Heart left ventricle (tissue), 16 donors: ENCODE measurements at regions of chr16 and their contacts with region 1.

Region 1: DNA sequence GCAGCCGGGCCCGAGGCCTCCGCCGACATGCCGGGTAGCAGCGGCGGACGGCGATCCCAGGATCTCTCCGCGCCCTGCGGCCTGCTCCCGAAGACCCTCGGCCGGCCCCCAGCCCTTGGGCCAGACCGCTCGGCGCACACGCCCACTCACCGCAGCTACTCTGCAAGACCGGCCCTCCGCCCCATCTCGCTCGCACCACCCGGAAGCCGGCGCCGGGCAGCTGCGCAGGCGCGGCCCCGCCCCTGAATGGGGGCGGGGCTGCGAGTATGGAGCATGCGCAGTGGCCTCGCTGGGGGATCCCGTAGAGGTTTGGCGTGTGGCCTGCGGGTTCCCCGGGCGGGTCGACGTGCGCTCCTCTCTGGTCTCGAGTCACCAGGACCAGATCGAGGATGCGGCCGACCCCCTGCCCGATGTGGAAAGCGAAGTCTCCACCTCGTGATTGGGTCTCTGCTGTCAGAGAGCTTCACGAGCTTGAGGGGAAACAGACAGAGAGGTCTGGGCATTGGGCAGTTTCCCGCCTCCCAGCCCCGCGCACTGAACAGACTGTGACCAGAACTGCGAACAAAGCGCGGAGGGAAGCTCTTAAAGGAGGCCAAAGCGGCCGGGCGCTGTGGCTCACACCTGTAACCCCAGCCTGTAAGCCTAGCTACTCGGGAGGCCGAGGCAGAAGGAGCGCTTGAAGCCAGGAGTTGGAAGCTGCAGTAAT is at the start of gene KCTD13:
- DNase-seq: peak; percentile 85 to 95 (median 89)
- ATAC-seq: peak; percentile 89 to 99 (median 99)
- H3K4me3 ChIP-seq: peak within 1 kb of the TSS; percentile 72 to 100 (median 92)
- H3K27ac ChIP-seq: peak within 1 kb of the TSS; percentile 72 to 96 (median 88)
- H3K4me1 ChIP-seq: peaks cover 4 to 27% (median 18%) of the 10 kb centered on the region in 12 donors
- H3K27me3 ChIP-seq: no peaks in the 10 kb centered on the region
- CTCF ChIP-seq: no peak
- POLR2A ChIP-seq: peak in 1 of 2 donors; percentile 93
- total RNA-seq, gene KCTD13: 3.6 to 9.1 (median 7.2) TPM

Region 2: DNA sequence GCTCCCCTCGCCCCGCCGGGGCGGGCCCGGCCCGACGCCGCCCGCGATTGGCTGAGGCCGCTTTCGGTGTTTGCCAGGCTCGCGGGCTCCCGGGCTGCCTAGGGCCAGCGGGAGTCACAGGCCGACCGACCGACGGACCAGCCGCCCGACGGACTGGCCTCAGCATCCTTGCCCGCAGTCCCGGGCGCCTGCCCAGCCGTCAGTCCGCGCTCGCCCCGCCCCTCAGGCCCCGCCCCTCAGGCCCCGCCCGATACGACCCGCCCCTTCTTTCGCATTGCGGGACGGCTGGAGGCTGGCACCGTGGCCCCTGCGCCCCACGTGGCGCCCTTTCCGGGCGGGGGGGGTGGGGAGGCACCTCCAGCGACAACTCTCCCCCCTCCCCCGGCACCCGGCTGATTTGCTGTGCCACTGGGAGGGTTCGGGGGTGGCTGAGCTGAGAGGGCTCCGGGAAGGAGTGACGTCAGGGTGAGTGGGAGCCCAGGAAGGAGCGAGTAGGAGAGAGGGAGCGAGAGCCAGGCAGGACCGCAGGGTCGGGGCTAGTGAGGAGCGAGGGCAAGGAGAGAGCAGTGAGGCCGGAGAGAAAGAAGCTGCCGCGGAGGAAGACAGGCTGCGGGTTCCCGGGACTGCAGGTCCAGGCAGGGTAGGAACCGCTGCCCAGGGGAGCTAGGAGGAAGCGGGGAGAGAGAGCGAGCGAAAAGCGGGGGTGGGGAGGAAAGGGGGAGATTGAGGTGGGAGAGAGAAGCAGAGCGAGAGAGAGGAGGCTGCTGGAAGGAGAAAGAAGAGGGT is 25.9 kb before region 1 on chr16 and contains the start of gene ASPHD1:
- intact Hi-C with region 1: loop called in 1 of 10 experiments (anchors 1 kb)
- DNase-seq: peak; percentile 60 to 85 (median 71)
- ATAC-seq: peak; percentile 49 to 90 (median 82)
- H3K4me3 ChIP-seq: peak within 1 kb of the TSS; percentile 38 to 77 (median 60)
- H3K27ac ChIP-seq: peak within 1 kb of the TSS in 3 of 12 donors; percentile 16 to 37 (median 30)
- H3K4me1 ChIP-seq: peaks cover 0 to 23% (median 7%) of the 10 kb centered on the region in 12 donors
- H3K27me3 ChIP-seq: peaks cover 6 to 30% (median 19%) of the 10 kb centered on the region in 9 donors
- CTCF ChIP-seq: no peak
- POLR2A ChIP-seq: no peak
- total RNA-seq, gene ASPHD1: 0.20 to 5.3 (median 0.65) TPM in 6 of 9 donors, not detected in the others

Region 3: GRCh38 chr16:29961479-29962343 is 35.6 kb after region 1 on chr16 and contains the start of gene TMEM219:
- intact Hi-C with region 1: loop called in 4 of 10 experiments (anchors 1 to 5 kb)
- DNase-seq: peak; percentile 93 to 97 (median 94)
- ATAC-seq: peak; percentile 89 to 99 (median 97)
- H3K4me3 ChIP-seq: peak within 1 kb of the TSS; percentile 59 to 98 (median 76)
- H3K27ac ChIP-seq: peak within 1 kb of the TSS; percentile 76 to 98 (median 96)
- H3K4me1 ChIP-seq: peaks cover 0 to 35% (median 18%) of the 10 kb centered on the region in 12 donors
- H3K27me3 ChIP-seq: no peaks in the 10 kb centered on the region
- CTCF ChIP-seq: peak; percentile 23 to 67 (median 48)
- POLR2A ChIP-seq: peak in 1 of 2 donors; percentile 85
- total RNA-seq, gene TMEM219: 58.9 to 121 (median 69.8) TPM